ENCODE measurements at regions of chr5 and their contacts with region 1.

Region 1: DNA sequence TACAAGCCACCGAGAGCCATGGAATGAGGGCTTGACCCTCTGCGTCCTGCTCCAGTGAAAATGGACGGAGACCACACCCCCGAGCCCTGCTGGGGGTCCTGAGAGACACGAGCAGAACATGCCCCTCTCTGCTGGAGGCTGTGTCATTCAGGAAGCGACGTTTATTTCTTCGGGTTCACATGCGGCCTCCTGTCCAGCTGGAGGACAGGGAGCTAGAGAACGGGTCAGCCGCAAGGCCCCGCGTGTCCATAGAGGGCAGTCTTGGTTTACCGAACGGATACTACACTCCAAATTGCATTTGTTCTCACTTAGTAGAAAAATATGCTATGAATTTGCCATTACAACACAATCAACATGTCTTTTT is 36.1 kb downstream of the MRPL36 start:
- DNase-seq: peak; percentile 37
- H3K4me3 ChIP-seq: no peak overlapping the region
- H3K27ac ChIP-seq: no peak overlapping the region
- H3K27me3 ChIP-seq: peaks cover 16% of the 10 kb centered on the region
- CTCF ChIP-seq: peak; percentile 95

Region 2: DNA sequence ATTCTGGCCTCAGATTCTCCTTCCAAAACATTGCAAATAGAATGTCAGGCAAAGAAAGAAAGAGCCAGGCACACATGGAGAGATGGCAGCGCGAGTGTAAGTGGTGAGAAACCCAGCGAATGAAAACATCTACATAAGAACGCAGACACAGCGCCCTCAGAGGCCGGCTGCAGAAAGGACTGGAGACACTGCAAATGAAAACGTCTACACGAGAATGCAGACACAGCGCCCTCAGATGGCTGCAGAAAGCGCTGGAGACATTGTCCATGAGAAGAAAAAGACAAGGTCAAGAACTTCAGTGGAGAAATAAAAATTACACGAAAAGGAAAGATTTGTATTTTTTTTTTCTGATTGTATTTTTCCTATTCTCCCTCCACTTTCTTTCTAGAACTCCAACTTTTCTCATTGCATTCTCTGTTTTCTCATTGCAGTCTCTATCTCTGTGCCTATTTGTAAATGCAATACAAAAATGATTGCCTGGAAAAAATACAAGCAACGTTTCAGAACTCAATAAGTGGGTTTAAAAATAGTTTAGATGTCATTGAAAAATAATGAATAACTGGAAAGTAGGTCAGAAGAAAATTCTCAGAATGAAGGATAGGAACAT is 121.9 kb before region 1 on chr5:
- CTCF ChIA-PET with region 1: no interaction called
- POLR2A ChIA-PET with region 1: no interaction called
- DNase-seq: peak; percentile 72
- H3K4me3 ChIP-seq: no peak overlapping the region
- H3K27ac ChIP-seq: no peak overlapping the region
- H3K27me3 ChIP-seq: peaks cover 69% of the 10 kb centered on the region
- CTCF ChIP-seq: peak; percentile 93

Region 3: GRCh38 chr5:1724822-1725643 is 38.5 kb before region 1 on chr5:
- CTCF ChIA-PET with region 1: no interaction called
- POLR2A ChIA-PET with region 1: no interaction called
- DNase-seq: no peak
- H3K4me3 ChIP-seq: no peak overlapping the region; the same call in 1 of the 2 replicates
- H3K27ac ChIP-seq: no peak overlapping the region
- H3K27me3 ChIP-seq: peaks cover 13% of the 10 kb centered on the region
- CTCF ChIP-seq: no peak

Region 4: GRCh38 chr5:2038321-2039179 is 275.0 kb after region 1 on chr5:
- CTCF ChIA-PET with region 1: interaction called, 75 read pairs
- POLR2A ChIA-PET with region 1: no interaction called
- DNase-seq: no peak
- H3K4me3 ChIP-seq: peak overlapping the region; percentile 29; the same call in 1 of the 2 replicates
- H3K27ac ChIP-seq: no peak overlapping the region
- H3K27me3 ChIP-seq: peaks cover 2% of the 10 kb centered on the region
- CTCF ChIP-seq: peak; percentile 56

Measured in AG04450 (cell line).